Activated CD4-positive, alpha-beta memory T cell treated with anti-CD3 and anti-CD28 coated beads for 36 hours (primary cell): ENCODE measurements at regions of chr22 and their contacts with region 1.

Region 1: GRCh38 chr22:20116951-20117645 is at the start of gene TRMT2A:
- DNase-seq: peak; percentile 98
- H3K4me3 Mint-ChIP-seq: peak within 1 kb of the TSS; percentile 92
- H3K27ac Mint-ChIP-seq: peak within 1 kb of the TSS; percentile 92
- H3K4me1 Mint-ChIP-seq: peaks cover 39% of the 10 kb centered on the region
- H3K27me3 Mint-ChIP-seq: no peaks in the 10 kb centered on the region
- total RNA-seq, gene TRMT2A: 70.6 to 75.8 TPM

Region 2: GRCh38 chr22:19854778-19855503 is 262.2 kb before region 1 on chr22 and contains the starts of genes GNB1L and RTL10:
- CTCF ChIA-PET with region 1: no interaction called
- POLR2A ChIA-PET with region 1: no interaction called
- intact Hi-C with region 1: loop called (anchors 1 kb)
- DNase-seq: peak; percentile 97
- H3K4me3 Mint-ChIP-seq: peak within 1 kb of the TSS; percentile 94
- H3K27ac Mint-ChIP-seq: peak within 1 kb of the TSS; percentile 98
- H3K4me1 Mint-ChIP-seq: peaks cover 42% of the 10 kb centered on the region
- H3K27me3 Mint-ChIP-seq: no peaks in the 10 kb centered on the region
- total RNA-seq, gene GNB1L: 11.3 to 12.3 TPM
- total RNA-seq, gene RTL10: 11.5 to 13.5 TPM

Region 3: GRCh38 chr22:20020533-20021195 is 96.4 kb before region 1 on chr22 and contains the start of gene TANGO2:
- CTCF ChIA-PET with region 1: no interaction called
- POLR2A ChIA-PET with region 1: no interaction called
- intact Hi-C with region 1: loop called (anchors 2 kb)
- DNase-seq: peak; percentile 94
- H3K4me3 Mint-ChIP-seq: peak within 1 kb of the TSS; percentile 91
- H3K27ac Mint-ChIP-seq: peak within 1 kb of the TSS; percentile 83
- H3K4me1 Mint-ChIP-seq: peaks cover 30% of the 10 kb centered on the region
- H3K27me3 Mint-ChIP-seq: no peaks in the 10 kb centered on the region
- total RNA-seq, gene TANGO2: 20.7 to 23.6 TPM

Region 4: DNA sequence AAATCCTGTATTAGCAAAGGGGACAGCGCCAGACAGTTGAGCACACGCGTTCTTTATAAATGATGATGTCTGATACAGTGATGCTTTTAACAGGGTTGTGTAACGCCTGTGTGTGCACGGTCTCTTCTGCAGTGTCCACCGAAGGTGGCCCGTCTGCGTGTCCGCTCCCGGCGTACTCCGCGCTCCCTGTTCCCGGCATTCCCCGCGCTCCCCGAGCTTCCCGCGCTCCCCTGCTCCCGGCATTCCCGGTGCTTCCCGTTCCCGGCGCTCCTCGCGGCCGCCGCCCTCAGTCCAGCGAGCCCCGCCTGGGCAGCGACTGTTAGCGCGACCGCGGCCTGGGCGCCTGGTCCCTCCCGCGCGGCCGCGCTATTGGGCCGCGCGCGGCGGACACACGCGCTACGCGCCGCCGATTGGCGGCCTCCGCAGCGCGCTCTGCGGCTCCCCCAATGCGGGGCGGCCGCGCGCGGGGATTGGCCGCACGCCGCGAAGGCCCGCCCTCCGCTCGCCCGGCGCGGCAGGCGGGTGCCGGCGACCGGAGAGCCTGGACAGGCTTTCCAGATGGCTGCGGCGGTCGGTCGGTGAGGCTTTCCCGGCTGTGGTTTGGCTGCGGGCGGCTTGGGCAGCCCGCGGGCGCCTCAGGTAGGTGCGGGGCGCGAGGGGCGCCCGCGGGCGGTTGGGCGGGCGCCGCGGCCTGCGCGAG is 37.2 kb before region 1 on chr22 and contains the start of gene DGCR8:
- CTCF ChIA-PET with region 1: interaction called, 3 read pairs
- POLR2A ChIA-PET with region 1: no interaction called
- intact Hi-C with region 1: loop called (anchors 1 kb)
- DNase-seq: peak; percentile 75
- H3K4me3 Mint-ChIP-seq: peak within 1 kb of the TSS; percentile 88
- H3K27ac Mint-ChIP-seq: peak within 1 kb of the TSS; percentile 79
- H3K4me1 Mint-ChIP-seq: peaks cover 37% of the 10 kb centered on the region
- H3K27me3 Mint-ChIP-seq: no peaks in the 10 kb centered on the region
- total RNA-seq, gene DGCR8: 33.4 to 34.3 TPM

Region 5: DNA sequence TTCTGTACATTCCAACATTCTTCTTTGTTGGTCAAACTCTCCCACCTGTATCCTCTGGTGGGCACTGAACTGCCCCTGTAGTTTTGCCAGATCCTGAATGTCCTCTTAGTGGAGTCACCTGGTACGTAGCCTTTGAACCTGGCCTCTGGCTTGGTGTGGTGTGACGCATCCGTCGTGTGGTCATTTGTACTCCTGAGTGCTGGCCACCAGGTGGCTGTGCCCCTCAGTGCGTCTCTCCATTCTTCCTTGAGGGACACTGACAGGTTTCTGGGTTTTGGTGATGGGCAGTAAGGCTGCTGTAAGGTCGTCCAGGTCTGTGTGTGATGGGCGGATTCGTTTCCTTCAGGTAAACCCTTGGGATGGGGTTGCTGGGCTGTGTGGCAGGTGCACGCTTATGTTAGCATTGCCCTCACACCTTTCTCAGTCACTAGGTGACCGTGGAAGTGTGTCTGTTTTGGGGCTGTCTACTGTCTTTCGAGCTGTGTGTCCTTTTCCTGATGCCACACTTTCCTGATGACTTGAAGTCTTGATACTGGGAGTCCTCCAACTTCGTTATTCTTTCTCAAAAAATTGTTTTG is 14.8 kb before region 1 on chr22:
- CTCF ChIA-PET with region 1: interaction called, 4 read pairs
- POLR2A ChIA-PET with region 1: interaction called, 7 read pairs
- intact Hi-C with region 1: loop called (anchors 1 kb)
- DNase-seq: no peak
- H3K4me3 Mint-ChIP-seq: no peak overlapping the region
- H3K27ac Mint-ChIP-seq: peak overlapping the region; percentile 62
- H3K4me1 Mint-ChIP-seq: peaks cover 47% of the 10 kb centered on the region
- H3K27me3 Mint-ChIP-seq: no peaks in the 10 kb centered on the region

Region 6: DNA sequence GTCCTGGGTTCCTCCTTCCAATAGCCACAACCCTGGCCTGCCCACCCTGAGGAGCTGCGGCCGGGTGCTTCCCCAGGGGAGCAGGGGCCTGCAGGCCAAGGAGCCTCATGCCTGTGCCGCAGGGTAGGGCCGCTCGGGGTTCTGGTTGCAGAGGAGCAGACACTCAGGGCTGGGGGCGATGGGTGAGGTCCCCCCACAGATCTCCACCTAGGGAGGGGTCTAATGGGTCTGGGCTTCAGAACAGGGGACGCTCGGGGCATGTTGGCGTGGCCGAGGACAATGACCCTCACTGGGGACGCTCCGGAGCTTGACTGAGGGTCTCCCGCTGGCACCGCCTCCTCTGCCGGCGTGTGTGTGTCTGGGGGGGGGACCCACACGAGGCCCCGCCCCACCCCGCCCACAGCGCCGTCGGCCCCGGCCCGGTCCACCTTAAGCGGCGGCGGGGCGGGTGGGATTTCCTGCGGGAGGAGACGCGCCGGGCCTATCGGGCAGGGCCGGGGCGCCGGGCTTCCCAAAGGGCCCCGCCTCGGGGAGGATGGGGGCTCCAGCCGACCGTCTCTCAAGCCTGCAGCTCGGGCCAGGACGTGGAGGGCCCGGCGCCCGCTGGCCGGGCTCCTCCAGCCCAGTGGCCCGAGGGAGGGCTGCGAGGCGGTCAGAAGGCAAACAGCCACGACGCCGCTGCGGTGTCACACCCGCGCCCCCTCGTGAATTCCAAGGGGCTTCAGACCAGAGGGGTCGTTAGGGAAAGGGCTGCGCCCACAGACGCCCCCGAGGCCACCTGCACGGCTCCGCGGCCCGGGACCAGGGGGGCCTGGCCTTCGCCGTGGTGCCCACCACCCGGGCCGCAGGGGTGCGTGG is 13.9 kb after region 1 on chr22:
- CTCF ChIA-PET with region 1: interaction called, 14 read pairs
- POLR2A ChIA-PET with region 1: interaction called, 17 read pairs
- intact Hi-C with region 1: loop called (anchors 1 kb)
- DNase-seq: peak; percentile 75
- H3K4me3 Mint-ChIP-seq: peak overlapping the region; percentile 45
- H3K27ac Mint-ChIP-seq: no peak overlapping the region
- H3K4me1 Mint-ChIP-seq: peaks cover 32% of the 10 kb centered on the region
- H3K27me3 Mint-ChIP-seq: no peaks in the 10 kb centered on the region